HCT116 (cell line): ENCODE measurements at regions of chr12 and their contacts with region 1.

Region 1: GRCh38 chr12:48165094-48165981 is 8.0 kb upstream of the ASB8 start:
- DNase-seq: peak; percentile 57
- ATAC-seq: peak; percentile 80
- H3K4me3 ChIP-seq: no peak overlapping the region
- H3K27ac ChIP-seq: no peak overlapping the region
- H3K4me1 ChIP-seq: no peaks in the 10 kb centered on the region
- H3K27me3 ChIP-seq: no peaks in the 10 kb centered on the region
- CTCF ChIP-seq: peak; percentile 85 to 92 (median 88)
- POLR2A ChIP-seq: no peak
- RAD21 ChIP-seq: peak; percentile 86

Region 2: DNA sequence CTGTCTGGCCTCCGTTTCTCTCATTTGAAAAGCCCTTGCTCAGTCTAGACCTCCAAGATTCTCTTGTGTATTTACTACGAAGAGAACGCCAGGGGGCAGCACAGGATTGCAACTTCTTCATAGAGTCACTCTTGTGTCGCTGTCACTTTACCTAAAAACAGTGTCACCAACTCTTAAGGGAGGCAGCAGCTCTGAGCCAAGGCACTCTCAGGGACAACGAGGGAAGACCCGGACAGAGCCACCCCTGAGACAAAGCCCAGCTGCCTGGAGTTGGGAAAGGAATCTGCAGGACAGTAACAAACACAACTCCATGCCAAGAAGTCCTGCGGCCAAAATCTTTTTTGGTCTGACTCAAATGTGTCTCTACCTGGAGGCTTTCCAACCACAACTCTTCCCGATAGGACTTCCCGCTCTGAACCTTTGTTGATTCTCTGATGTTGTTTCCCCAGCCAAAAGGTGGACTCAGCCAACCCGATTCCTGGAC is 449.9 kb before region 1 on chr12:
- CTCF ChIA-PET with region 1: no interaction called
- POLR2A ChIA-PET with region 1: no interaction called
- RAD21 ChIA-PET with region 1: no interaction called
- intact Hi-C with region 1: loop called (anchors 10 kb)
- DNase-seq: peak; percentile 74
- ATAC-seq: peak; percentile 87
- H3K4me3 ChIP-seq: no peak overlapping the region
- H3K27ac ChIP-seq: no peak overlapping the region
- H3K4me1 ChIP-seq: peaks cover 0 to 7% of the 10 kb centered on the region in 2 experiments; a peak in 1 of 4 replicates
- H3K27me3 ChIP-seq: no peaks in the 10 kb centered on the region
- CTCF ChIP-seq: peak; percentile 70 to 90 (median 86)
- POLR2A ChIP-seq: no peak
- RAD21 ChIP-seq: peak; percentile 95

Region 3: DNA sequence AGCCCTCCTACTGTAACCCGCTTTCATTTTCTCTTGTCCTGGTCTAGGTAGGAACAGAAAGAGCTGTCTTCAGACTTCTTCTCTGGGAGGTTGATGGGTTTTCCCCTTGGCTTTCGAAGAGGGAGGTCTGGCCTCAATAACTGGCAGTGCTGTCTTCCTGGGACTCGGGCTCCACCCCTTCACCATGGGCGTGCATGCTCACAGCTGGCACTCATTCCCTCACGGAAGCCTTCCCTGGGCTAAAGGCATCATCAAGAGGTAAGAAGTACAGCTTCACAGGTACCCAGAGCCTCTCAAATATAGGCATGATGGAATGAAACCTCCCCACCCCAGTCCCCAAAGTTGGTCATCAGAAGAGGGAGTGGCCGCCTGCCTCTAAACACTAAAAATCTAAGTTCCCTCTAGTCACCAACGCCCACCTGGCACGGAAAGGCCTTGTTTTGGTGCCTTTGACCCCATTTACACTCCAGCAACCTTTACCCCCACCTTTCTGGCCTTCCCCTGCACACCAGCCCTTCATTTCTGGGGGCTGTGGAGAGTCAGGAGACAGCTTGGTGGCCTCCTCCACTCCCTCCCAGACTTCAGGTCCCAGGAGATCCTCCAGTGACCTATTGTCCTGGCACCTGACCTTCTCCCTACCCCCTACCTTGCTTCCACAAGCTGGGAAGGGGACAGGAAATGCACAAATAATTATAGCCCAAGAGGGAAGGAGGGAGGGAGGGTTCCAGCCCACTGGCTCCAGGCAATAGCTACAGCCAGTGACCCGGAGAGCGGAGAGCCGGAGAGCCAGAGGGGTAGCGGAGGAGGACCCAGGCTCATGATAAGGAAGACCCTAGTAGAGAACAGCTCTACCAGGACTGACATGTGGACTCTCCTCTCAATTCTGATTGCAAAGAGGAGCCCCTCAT is 409.4 kb before region 1 on chr12:
- CTCF ChIA-PET with region 1: no interaction called
- POLR2A ChIA-PET with region 1: no interaction called
- RAD21 ChIA-PET with region 1: no interaction called
- intact Hi-C with region 1: no loop called
- DNase-seq: no peak
- ATAC-seq: no peak
- H3K4me3 ChIP-seq: no peak overlapping the region
- H3K27ac ChIP-seq: no peak overlapping the region
- H3K4me1 ChIP-seq: peaks cover 43 to 63% of the 10 kb centered on the region in 2 experiments
- H3K27me3 ChIP-seq: no peaks in the 10 kb centered on the region
- CTCF ChIP-seq: no peak
- POLR2A ChIP-seq: no peak
- RAD21 ChIP-seq: no peak

Region 4: GRCh38 chr12:47904713-47905310 is 260.5 kb before region 1 on chr12 and contains the start of gene VDR:
- CTCF ChIA-PET with region 1: interaction called, 8 read pairs
- POLR2A ChIA-PET with region 1: interaction called, 3 read pairs
- RAD21 ChIA-PET with region 1: no interaction called
- intact Hi-C with region 1: loop called (anchors 2 kb)
- DNase-seq: peak; percentile 87
- ATAC-seq: peak; percentile 77
- H3K4me3 ChIP-seq: peak within 1 kb of the TSS; percentile 39 to 60
- H3K27ac ChIP-seq: peak within 1 kb of the TSS; percentile 63
- H3K4me1 ChIP-seq: peaks cover 18 to 51% of the 10 kb centered on the region in 2 experiments
- H3K27me3 ChIP-seq: no peaks in the 10 kb centered on the region
- CTCF ChIP-seq: no peak; a peak in 2 of 6 replicates
- POLR2A ChIP-seq: peak; percentile 56
- RAD21 ChIP-seq: no peak
- total RNA-seq, gene VDR: 9.5 TPM

Region 5: DNA sequence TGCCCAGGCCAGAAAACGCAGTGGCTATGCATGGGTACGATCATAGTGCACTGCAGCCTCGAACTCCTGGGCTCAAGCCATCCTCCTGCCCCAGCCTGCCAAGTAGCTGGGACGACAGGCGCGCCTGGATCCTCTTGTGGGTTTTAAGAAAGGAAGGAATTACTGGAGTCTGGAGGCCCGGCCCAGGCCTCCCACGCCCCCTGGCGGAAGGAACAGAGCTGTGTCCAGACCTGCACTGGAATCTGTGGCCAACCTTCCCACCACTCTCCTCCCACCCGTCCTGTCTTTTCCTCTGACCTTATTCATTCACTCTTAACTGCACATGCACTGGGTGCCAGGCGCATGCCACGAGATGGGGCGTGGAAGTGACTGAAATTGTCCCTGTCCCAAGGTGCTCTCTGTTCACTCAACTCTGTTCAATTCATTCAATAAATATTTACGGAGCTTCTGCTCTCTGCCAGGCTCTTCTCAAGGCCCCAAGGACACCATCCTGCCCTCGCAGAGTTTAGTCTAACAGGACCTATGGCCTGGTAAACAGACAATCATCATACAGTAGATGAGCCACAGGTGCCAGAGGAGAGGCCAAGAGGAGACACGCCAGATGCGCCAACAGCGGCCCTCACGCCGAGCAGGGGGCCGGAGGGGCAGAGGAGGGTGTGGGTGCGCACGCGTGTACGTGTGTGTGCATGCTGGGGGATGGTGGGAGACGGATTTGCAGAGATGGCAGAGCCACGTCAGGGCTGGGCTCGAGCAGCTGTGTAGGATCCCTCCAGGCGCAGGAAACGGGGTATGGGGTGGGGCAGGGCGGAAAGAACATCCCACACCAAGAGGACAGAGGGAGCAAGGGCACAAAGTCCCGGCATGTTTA is 215.7 kb before region 1 on chr12:
- CTCF ChIA-PET with region 1: interaction called, 4 read pairs
- POLR2A ChIA-PET with region 1: no interaction called
- RAD21 ChIA-PET with region 1: no interaction called
- intact Hi-C with region 1: loop called (anchors 10 kb)
- DNase-seq: peak; percentile 69
- ATAC-seq: peak; percentile 98
- H3K4me3 ChIP-seq: no peak overlapping the region
- H3K27ac ChIP-seq: no peak overlapping the region; the same call in 1 of the 2 replicates
- H3K4me1 ChIP-seq: peaks cover 12 to 46% of the 10 kb centered on the region in 2 experiments; a peak in 3 of 4 replicates
- H3K27me3 ChIP-seq: no peaks in the 10 kb centered on the region
- CTCF ChIP-seq: peak; percentile 85 to 96 (median 91)
- POLR2A ChIP-seq: no peak
- RAD21 ChIP-seq: peak; percentile 89

Region 6: DNA sequence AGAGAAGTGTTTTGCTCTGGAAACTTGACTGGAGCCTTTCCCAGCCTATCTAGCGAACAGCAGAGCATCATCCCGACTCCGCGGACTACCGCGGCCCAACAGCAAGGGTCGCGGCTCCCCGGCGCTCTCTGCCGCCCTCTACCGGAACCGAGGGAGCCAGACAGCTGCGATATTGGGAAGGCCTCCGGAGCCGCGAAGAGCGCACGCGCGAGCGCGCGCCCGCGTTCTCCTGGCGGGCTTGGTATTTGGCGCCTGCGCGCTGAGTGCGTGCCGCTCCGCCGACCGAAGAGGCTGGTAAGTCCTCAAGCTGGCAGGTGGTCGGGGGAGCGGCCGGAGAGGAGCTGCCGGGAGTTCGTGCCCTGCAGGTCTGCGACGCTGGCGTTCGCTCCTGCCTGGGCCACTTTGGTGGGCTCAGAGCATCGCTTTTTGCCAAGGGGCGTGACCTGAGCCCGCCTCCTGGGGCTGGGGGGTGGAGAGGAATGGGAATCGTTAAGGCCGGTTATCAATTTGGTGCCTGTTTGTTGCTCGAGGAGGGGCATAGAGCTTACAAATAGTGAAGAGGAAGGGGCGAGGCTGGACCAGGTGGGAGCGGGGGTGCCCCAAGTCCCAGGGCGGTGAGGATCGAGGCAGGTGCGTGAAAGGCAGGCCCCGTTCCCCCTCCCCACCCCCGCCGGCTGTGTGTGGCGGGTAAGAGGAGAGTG is 201.8 kb before region 1 on chr12 and contains the start of gene TMEM106C:
- CTCF ChIA-PET with region 1: interaction called, 4 read pairs
- POLR2A ChIA-PET with region 1: no interaction called
- RAD21 ChIA-PET with region 1: no interaction called
- intact Hi-C with region 1: loop called (anchors 5 kb)
- DNase-seq: peak; percentile 80
- ATAC-seq: peak; percentile 96
- H3K4me3 ChIP-seq: peak within 1 kb of the TSS; percentile 79 to 80
- H3K27ac ChIP-seq: peak within 1 kb of the TSS; percentile 73
- H3K4me1 ChIP-seq: peaks cover 3 to 13% of the 10 kb centered on the region in 2 experiments; a peak in 3 of 4 replicates
- H3K27me3 ChIP-seq: no peaks in the 10 kb centered on the region
- CTCF ChIP-seq: peak; percentile 89 to 96 (median 92)
- POLR2A ChIP-seq: peak; percentile 62
- RAD21 ChIP-seq: peak; percentile 67
- total RNA-seq, gene TMEM106C: 94.7 TPM

Region 7: GRCh38 chr12:48084066-48084465 is 81.3 kb before region 1 on chr12:
- CTCF ChIA-PET with region 1: interaction called, 5 read pairs
- POLR2A ChIA-PET with region 1: no interaction called
- RAD21 ChIA-PET with region 1: no interaction called
- intact Hi-C with region 1: loop called (anchors 1 kb)
- DNase-seq: no peak
- ATAC-seq: no peak
- H3K4me3 ChIP-seq: no peak overlapping the region
- H3K27ac ChIP-seq: no peak overlapping the region
- H3K4me1 ChIP-seq: no peaks in the 10 kb centered on the region
- H3K27me3 ChIP-seq: no peaks in the 10 kb centered on the region
- CTCF ChIP-seq: peak in 2 of 3 experiments; percentile 34 to 42; a peak in 2 of 6 replicates
- POLR2A ChIP-seq: no peak
- RAD21 ChIP-seq: peak; percentile 46